H1 (cell line): ENCODE measurements at regions of chr11 and their contacts with region 1.

Region 1: DNA sequence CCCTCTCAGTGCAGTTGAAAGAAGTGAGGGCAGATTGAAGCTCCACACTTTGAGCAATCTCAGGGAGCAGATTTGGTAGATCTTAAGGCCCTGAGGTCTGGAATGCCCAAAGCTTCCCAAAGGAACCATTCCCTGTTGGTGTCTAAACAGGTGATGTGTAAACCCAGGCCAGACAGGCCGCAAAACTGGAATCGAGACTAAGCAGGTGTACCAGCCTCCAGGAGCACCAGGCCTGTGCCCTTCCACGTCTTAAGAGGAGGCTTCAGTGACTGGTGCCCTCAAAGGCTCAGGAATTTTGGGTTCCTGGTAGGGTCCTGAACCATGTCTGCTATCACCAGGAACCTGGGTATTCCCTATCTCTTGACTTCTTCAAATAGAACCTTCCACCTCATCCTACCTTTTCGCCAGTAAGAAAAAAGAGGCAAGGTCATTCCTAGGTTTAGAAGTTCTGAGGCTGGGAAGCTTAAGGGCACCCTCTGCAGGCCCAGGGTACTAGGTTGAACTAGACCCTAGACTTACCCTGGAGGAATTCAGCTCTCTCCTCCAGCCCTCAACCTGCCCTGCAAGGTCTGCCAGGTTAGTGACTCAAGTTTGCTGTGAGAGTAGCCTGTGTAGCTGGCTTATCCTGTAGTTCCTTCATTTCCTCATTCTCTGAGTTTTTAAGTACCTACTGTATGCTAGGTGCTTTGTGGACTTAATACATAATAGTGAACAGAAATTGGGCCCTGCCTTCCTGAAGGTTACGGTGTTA is 100.0 kb upstream of the NNMT start:
- DNase-seq: no peak
- H3K4me3 ChIP-seq: no peak overlapping the region
- H3K27ac ChIP-seq: no peak overlapping the region
- H3K4me1 ChIP-seq: peaks cover 0 to 5% (median 0%) of the 10 kb centered on the region in 4 experiments; a peak in 2 of 7 replicates
- H3K27me3 ChIP-seq: no peaks in the 10 kb centered on the region
- CTCF ChIP-seq: no peak
- EP300 ChIP-seq: no peak
- POLR2A ChIP-seq: no peak
- RAD21 ChIP-seq: peak in 1 of 2 experiments; percentile 28; a peak in 1 of 4 replicates

Region 2: GRCh38 chr11:114026355-114026754 is 169.8 kb before region 1 on chr11:
- CTCF ChIA-PET with region 1: interaction called, 18 read pairs
- POLR2A ChIA-PET with region 1: no interaction called
- DNase-seq: peak in 1 of 2 experiments; percentile 10
- H3K4me3 ChIP-seq: no peak overlapping the region
- H3K27ac ChIP-seq: no peak overlapping the region
- H3K4me1 ChIP-seq: no peaks in the 10 kb centered on the region
- H3K27me3 ChIP-seq: peaks cover 0 to 2% (median 0%) of the 10 kb centered on the region in 4 experiments; a peak in 1 of 7 replicates
- CTCF ChIP-seq: peak in 2 of 3 experiments; percentile 48 to 68; a peak in 3 of 4 replicates
- EP300 ChIP-seq: no peak
- POLR2A ChIP-seq: no peak
- RAD21 ChIP-seq: peak; percentile 29 to 45; a peak in 3 of 4 replicates

Region 3: DNA sequence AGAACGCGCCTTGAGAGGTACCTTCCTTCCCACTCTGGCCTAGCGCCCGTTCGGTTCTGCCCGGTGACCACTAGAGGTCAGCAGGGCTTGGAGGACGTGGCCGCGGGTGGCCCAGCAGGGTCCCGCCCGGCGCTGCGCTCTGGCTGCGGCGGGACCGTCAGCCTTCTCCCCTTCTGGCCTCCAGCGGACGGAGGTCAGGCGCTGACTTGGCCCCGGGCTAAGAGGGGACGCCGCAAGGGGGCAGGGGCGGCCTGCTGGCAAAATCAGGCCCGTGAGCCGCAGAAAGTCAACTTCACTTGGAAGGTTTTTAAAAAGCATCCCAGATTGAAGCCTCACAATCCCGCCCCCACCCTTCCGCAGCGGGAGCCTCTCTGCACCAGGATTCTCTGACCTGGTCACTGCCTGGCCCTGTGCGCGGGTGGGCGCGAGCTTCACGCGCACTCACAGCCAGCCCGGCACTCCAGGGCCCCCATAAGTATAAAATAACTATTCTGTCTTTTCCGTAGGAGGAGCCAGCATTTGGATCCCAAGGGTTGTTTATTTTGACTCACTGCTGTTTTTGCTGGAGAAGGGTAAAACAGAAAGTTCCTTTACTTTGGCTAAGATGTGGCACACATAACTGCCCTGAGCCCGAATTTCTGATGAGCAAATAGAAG is 159.9 kb before region 1 on chr11:
- CTCF ChIA-PET with region 1: interaction called, 14 read pairs
- POLR2A ChIA-PET with region 1: no interaction called
- DNase-seq: peak; percentile 86 to 90
- H3K4me3 ChIP-seq: peak overlapping the region in 1 of 4 experiments; percentile 43; a peak in 2 of 8 replicates
- H3K27ac ChIP-seq: no peak overlapping the region
- H3K4me1 ChIP-seq: no peaks in the 10 kb centered on the region
- H3K27me3 ChIP-seq: peaks cover 0 to 3% (median 0%) of the 10 kb centered on the region in 4 experiments; a peak in 2 of 7 replicates
- CTCF ChIP-seq: peak; percentile 70 to 98 (median 96)
- EP300 ChIP-seq: 0 out of 3 replicates have a peak, but pooled peaks of 1 of the 2 experiments have one; percentile 56
- POLR2A ChIP-seq: no peak
- RAD21 ChIP-seq: peak; percentile 81 to 87

Region 4: DNA sequence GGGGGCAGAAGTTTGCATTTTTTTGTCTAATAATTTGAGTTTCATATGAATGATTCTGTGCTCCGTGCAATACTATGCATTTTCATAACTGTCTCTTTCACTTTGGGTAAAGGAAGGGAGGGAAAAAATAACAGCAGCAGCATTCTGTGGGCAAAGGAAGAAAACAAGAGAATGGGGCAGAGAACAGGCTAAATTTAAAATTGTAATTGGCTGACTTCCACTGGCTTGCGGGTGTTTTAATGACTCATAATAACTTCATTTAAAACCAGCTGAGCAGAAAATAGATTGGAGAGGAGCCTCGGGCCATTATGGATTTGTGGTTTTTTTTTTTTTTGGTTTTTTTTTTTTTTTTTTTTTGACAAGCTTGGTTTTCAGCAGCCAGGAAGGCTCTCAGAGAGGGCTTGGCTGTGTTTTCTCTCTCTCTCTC is 29.2 kb before region 1 on chr11:
- CTCF ChIA-PET with region 1: interaction called, 11 read pairs
- POLR2A ChIA-PET with region 1: no interaction called
- DNase-seq: no peak
- H3K4me3 ChIP-seq: no peak overlapping the region
- H3K27ac ChIP-seq: no peak overlapping the region
- H3K4me1 ChIP-seq: peaks cover 0 to 2% (median 0%) of the 10 kb centered on the region in 4 experiments; a peak in 1 of 7 replicates
- H3K27me3 ChIP-seq: no peaks in the 10 kb centered on the region
- CTCF ChIP-seq: no peak
- EP300 ChIP-seq: no peak
- POLR2A ChIP-seq: no peak
- RAD21 ChIP-seq: no peak

Region 5: DNA sequence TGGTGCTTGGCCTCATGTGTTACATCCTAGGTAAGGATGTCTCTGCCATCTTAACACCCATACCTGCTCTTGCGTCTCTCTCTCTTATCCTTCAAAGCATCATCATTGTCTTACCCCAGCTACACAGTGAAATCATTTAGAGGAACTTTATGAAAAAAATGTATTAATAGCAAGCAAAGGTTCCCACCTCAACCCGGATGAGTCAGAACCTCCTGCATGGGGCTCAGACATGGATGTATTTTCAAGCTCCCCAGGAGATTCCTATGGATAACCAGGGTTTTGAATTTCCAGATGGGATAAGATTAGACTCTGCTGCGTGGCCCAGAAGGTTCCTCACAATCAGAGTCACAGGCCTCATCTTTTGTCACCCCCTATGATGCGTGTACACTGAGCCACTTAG is 10.9 kb after region 1 on chr11:
- CTCF ChIA-PET with region 1: interaction called, 15 read pairs
- POLR2A ChIA-PET with region 1: interaction called, 3 read pairs
- DNase-seq: no peak
- H3K4me3 ChIP-seq: no peak overlapping the region
- H3K27ac ChIP-seq: no peak overlapping the region
- H3K4me1 ChIP-seq: peaks cover 0 to 5% (median 2%) of the 10 kb centered on the region in 4 experiments; a peak in 3 of 7 replicates
- H3K27me3 ChIP-seq: no peaks in the 10 kb centered on the region
- CTCF ChIP-seq: no peak
- EP300 ChIP-seq: no peak
- POLR2A ChIP-seq: no peak
- RAD21 ChIP-seq: no peak